Ascending aorta (tissue), 2 donors: ENCODE measurements at regions of chr4 and their contacts with region 1.

Region 1: DNA sequence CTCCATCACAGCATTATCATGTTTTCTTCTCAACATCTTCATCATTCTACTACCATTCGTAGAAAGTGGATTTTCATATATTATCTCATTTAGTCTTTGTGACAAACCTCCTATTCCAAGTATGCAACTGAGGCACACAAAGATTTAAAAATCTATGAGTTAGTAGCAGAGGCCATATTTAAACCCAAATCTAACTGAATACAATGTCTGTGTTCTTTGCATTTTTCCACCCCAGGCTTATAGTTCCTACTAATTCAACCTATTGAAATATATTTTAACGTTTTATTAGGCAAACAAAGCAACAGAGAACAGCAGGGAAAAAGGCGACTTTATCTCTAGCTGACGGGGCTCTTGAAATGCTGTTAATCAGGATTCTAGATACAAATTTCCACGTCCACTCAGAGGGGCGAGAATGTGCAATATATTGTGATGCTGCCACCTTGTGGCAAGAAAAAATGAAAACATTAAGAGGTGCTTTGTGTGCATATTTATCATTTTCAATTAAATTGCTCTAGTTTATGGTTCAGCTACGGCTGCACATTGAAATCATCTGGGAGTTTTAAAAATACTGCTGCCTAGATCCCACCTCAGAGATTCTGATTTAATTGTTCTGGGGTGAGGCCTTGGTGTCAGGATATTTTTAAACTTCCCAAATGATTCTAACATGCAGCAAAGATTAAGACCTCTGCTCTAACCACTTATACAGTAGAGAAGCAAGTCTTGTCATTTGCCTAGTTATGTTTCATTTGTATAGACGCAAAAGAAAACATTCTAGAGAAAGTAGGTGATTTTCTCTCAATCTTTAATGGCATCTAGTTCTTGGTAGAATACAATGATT is 315.9 kb downstream of the MAPK10 start:
- DNase-seq: peak in 1 of 2 donors; percentile 68
- H3K4me3 ChIP-seq: peak overlapping the region in 1 of 2 donors; percentile 16
- H3K27ac ChIP-seq: no peak overlapping the region
- H3K4me1 ChIP-seq: no peaks in the 10 kb centered on the region
- H3K27me3 ChIP-seq: no peaks in the 10 kb centered on the region
- CTCF ChIP-seq: peak; percentile 57 to 72 (median 57)

Region 2: GRCh38 chr4:85084380-85085094 is 959.4 kb before region 1 on chr4:
- intact Hi-C with region 1: loop called (anchors 10 kb)
- DNase-seq: no peak
- H3K4me3 ChIP-seq: no peak overlapping the region
- H3K27ac ChIP-seq: no peak overlapping the region
- H3K4me1 ChIP-seq: no peaks in the 10 kb centered on the region
- H3K27me3 ChIP-seq: no peaks in the 10 kb centered on the region
- CTCF ChIP-seq: peak; percentile 48 to 61 (median 50)

Region 3: GRCh38 chr4:85147439-85148076 is 896.4 kb before region 1 on chr4:
- intact Hi-C with region 1: loop called (anchors 5 kb)
- DNase-seq: no peak
- H3K4me3 ChIP-seq: no peak overlapping the region
- H3K27ac ChIP-seq: no peak overlapping the region
- H3K4me1 ChIP-seq: no peaks in the 10 kb centered on the region
- H3K27me3 ChIP-seq: no peaks in the 10 kb centered on the region
- CTCF ChIP-seq: peak; percentile 21 to 55 (median 27)

Region 4: DNA sequence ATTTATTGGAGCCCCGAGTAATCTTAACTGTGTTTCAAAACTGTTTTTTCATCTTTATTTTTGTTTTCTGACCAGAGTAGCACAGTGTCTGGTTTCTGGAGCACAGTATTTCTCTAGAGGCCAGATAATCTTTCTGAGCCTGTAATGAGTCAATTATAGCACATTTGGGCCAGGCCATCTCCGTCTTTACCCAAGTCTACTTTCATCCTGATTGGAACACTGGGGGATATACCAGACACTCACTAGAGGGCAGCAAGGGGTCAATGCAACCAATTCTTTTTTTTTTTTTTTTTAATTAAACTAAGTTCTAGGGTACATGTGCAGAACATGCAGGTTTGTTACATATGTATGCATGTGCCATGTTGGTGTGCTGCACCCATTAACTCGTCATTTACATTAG is 287.0 kb before region 1 on chr4:
- intact Hi-C with region 1: loop called (anchors 5 kb)
- DNase-seq: no peak
- H3K4me3 ChIP-seq: no peak overlapping the region
- H3K27ac ChIP-seq: no peak overlapping the region
- H3K4me1 ChIP-seq: peaks cover 0 to 8% of the 10 kb centered on the region in 2 donors
- H3K27me3 ChIP-seq: no peaks in the 10 kb centered on the region
- CTCF ChIP-seq: peak; percentile 9 to 42 (median 25)

Region 5: DNA sequence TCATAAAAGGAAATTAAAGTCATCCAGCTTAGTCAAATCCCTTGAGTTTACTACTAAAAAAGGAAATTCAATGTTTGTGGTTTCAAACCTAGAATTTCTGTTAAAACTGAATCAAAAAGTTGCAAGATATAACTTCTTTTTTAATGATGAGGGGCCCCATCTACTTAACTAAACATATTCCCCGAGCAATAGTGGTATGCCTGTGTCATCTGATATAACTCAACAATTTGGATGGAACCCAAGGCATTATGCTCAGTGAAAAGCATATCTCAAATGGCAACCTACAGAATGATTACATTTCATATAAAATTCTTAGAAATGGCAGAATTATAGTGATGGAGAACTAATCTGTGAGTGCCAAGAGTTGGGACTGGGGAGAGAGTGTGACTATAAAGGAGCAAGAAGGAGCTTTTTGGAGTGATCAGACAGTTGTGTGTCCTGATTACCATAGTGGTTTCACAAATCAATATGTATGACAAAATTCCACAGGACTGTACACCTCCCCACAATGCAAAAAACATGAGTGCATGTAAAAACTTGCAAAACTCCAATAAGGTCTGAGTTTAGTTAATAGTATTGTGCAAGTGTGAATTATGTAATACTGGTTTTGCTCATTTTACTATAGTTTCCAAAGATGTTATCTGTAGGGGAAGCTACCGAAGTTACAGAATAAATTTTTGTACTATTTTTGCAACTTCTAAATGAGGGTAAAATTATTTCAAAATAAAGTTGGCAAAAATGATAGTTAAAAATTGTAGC is 245.8 kb before region 1 on chr4:
- intact Hi-C with region 1: loop called (anchors 2 kb)
- DNase-seq: no peak
- H3K4me3 ChIP-seq: no peak overlapping the region
- H3K27ac ChIP-seq: peak overlapping the region in 1 of 2 donors; percentile 66
- H3K4me1 ChIP-seq: peaks cover 0 to 14% of the 10 kb centered on the region in 2 donors
- H3K27me3 ChIP-seq: no peaks in the 10 kb centered on the region
- CTCF ChIP-seq: no peak

Region 6: GRCh38 chr4:85909851-85910250 is 134.1 kb before region 1 on chr4:
- intact Hi-C with region 1: no loop called
- DNase-seq: peak in 1 of 2 donors; percentile 72
- H3K4me3 ChIP-seq: no peak overlapping the region
- H3K27ac ChIP-seq: no peak overlapping the region
- H3K4me1 ChIP-seq: peaks cover 0 to 2% of the 10 kb centered on the region in 2 donors
- H3K27me3 ChIP-seq: no peaks in the 10 kb centered on the region
- CTCF ChIP-seq: no peak

Region 7: DNA sequence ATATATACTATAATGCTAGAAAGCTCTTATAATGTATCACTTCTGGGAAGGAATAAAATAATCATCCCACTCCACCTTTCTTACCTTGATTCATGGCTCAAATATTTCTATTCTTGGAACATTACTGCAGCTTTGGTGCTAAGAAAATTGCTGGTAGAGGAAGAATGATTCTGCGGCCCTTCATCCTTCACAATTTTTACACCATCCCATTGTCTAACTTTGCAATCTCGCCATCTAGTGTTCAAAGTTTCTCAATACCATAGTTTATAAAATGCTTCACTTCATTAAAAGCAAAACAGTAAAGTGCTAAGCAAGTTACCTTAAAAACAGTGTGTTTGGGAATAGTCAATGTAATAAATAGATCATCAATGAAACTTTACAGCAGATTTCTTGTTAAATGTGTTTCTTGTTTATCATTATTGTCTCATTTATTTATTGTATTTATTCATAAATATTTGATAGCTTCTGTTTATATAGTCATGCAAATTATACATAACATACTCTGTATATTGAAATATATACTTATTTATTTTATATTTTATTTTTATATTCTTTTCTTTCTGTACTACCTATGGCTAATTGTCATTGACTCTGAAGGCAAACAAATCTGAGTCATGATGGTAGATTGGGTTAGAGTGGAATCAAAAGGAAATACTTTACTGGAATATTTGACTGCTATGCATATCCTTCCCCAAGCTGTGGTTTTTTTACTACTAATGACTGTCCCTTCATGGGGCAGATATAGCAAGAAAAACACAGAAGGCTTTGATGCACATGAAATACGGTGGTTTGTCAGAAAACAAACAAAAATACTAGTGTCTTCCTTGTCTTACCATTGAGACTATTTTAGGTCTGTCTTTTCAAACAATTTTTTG is 74.8 kb before region 1 on chr4:
- intact Hi-C with region 1: loop called (anchors 2 kb)
- DNase-seq: no peak
- H3K4me3 ChIP-seq: no peak overlapping the region
- H3K27ac ChIP-seq: peak overlapping the region in 1 of 2 donors; percentile 26
- H3K4me1 ChIP-seq: peaks cover 0 to 6% of the 10 kb centered on the region in 2 donors
- H3K27me3 ChIP-seq: no peaks in the 10 kb centered on the region
- CTCF ChIP-seq: peak; percentile 26 to 63 (median 58)

Region 8: GRCh38 chr4:86019906-86020305 is 24.1 kb before region 1 on chr4:
- intact Hi-C with region 1: no loop called
- DNase-seq: no peak
- H3K4me3 ChIP-seq: no peak overlapping the region
- H3K27ac ChIP-seq: no peak overlapping the region
- H3K4me1 ChIP-seq: no peaks in the 10 kb centered on the region
- H3K27me3 ChIP-seq: no peaks in the 10 kb centered on the region
- CTCF ChIP-seq: no peak